ENCODE measurements at regions of chr2 and their contacts with region 1.

Region 1: DNA sequence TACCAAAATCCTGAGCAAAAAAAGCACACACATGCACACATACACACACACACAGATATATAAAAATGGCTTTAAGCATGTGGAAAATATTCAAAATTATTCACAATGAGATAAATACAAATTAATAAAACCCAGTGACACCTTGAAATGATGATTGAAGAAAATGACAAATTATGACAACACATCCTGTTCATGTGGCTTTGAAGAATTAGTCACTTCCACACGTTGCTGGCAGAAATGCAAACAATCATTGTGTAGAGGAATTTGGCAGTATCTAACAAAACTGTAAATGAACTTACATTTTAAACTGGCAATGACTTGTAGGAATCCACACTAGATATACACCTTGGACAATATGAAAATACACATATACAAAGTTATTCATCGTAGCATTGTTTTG is 95.8 kb upstream of the RGPD4 start:
- DNase-seq: no peak
- ATAC-seq: no peak
- H3K4me3 ChIP-seq: no peak overlapping the region
- H3K27ac ChIP-seq: peak overlapping the region; percentile 54; the same call in 1 of the 3 replicates
- H3K4me1 ChIP-seq: peaks cover 0 to 25% of the 10 kb centered on the region in 2 experiments; a peak in 3 of 5 replicates
- H3K27me3 ChIP-seq: no peaks in the 10 kb centered on the region
- CTCF ChIP-seq: no peak
- EP300 ChIP-seq: no peak
- POLR2A ChIP-seq: no peak
- RAD21 ChIP-seq: no peak

Region 2: GRCh38 chr2:107743274-107743673 is 12.4 kb after region 1 on chr2:
- CTCF ChIA-PET with region 1: no interaction called
- POLR2A ChIA-PET with region 1: interaction called, 22 read pairs
- in situ Hi-C with region 1: no loop called
- intact Hi-C with region 1: loop called (anchors 2 kb)
- DNase-seq: peak in 1 of 4 experiments; percentile 43
- ATAC-seq: peak; percentile 6
- H3K4me3 ChIP-seq: peak overlapping the region; percentile 47
- H3K27ac ChIP-seq: no peak overlapping the region; the same call in 1 of the 3 replicates
- H3K4me1 ChIP-seq: peaks cover 6 to 18% of the 10 kb centered on the region in 2 experiments; a peak in 3 of 5 replicates
- H3K27me3 ChIP-seq: no peaks in the 10 kb centered on the region
- CTCF ChIP-seq: no peak
- EP300 ChIP-seq: no peak
- POLR2A ChIP-seq: peak; percentile 40; the same call in 1 of the 2 replicates
- RAD21 ChIP-seq: no peak

Measured in K562 (cell line).